Mucosa of descending colon (tissue), 3 donors: ENCODE measurements at regions of chr6 and their contacts with region 1.

Region 1: DNA sequence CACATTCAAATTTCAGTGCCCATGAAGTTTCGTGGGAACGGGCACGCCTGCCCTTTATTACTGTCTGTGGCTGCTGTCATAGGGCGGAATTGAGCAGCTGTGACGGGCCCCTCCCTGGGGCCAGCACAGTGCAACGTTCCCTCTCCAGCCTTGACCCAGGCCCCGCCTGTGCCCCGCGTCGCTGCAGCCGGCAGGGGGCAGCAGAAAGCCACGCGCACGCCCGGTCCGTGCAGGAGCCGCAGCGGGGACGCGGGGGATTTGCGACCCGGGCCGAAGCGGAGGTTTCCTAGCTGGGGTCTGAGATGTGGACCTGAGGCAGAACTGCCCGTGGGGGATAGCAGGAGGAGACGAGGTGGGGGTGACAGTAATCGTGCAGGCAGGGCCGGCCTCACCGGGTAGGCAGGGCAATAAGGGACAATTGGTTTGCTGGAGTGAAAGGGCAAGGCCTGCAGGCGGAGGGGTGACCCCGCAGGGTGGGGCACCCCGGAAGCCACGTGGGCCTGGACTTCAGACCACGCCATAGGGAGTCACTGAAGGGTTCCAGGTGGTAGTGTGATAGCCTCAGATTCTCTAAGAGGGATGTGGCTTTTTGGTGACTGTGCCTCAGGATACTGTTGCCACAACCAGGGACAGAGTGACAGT is 54.4 kb downstream of the SYTL3 start:
- DNase-seq: peak; percentile 91 to 96 (median 91)
- ATAC-seq: peak; percentile 94
- H3K4me3 ChIP-seq: no peak overlapping the region
- H3K4me1 ChIP-seq: peaks cover 5% of the 10 kb centered on the region
- CTCF ChIP-seq: peak; percentile 98

Region 2: GRCh38 chr6:157789861-157790260 is 914.4 kb before region 1 on chr6:
- intact Hi-C with region 1: no loop called
- DNase-seq: no peak
- ATAC-seq: no peak
- H3K4me3 ChIP-seq: no peak overlapping the region
- H3K4me1 ChIP-seq: no peaks in the 10 kb centered on the region
- CTCF ChIP-seq: no peak

Region 3: DNA sequence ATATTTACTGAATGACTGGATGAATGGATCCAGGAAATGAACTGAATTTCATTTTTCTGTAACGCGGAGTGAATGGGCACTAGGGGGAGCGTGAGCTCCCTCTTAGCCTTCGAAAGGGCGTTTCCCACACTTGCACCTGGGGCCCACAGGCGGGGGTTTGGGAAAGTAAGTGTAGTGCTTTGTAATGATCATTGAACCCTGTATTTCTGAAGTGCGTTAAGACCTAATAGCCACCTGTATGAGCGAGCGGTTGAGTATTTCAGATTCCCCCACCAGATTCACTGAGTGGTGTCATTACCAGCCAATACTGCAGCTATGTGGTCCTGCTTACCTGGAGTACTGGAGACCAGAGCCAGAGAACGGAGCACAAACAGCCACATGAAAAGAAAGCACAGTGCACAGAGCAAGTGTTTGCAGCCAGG is 44.0 kb before region 1 on chr6:
- intact Hi-C with region 1: no loop called
- DNase-seq: peak; percentile 55 to 66 (median 63)
- ATAC-seq: peak; percentile 81
- H3K4me3 ChIP-seq: no peak overlapping the region
- H3K4me1 ChIP-seq: peaks cover 19% of the 10 kb centered on the region
- CTCF ChIP-seq: peak; percentile 39

Region 4: DNA sequence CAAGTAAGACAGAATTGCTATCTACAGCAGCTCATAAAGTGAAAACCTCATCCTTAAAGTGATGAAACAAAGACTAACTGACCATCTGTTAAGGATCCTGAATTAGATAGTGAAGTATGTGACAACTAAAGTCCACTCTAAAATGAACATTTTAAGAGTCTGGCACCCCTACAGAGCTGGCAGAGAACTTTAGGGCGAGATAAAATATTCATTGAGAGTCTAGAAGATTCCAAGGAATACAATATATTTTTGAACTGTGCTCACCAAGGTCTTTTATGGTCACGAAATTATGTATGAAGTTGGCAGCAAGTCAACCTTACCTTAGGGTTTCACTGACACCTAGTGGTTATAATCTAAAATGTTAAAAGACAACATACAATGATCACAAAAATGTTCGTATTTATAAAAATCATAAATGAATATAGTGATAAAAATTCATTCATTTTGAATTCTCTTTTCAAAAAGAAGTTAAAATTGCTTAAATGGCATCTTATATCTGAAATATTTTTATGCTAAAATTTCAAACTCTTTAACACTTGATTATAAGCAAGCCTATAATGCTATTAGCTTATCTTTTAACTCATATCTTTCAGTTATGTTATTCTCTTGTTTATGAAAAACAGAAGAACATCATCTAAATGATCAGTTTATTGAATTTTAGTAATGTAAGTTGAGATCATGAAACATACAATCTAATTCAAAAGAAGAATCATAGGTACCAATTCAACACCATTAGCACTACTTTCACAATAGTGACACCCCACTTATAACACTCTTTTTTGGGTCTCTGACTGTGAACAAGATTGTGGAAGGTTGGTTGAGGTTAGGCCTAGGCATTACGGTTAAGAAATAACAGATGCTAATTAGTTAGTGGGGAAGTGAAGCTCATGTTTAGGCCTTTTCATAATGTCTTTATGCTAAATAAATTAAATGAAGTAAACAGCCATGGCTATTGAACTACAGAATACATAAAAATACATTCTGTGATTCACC is 268.2 kb after region 1 on chr6:
- intact Hi-C with region 1: loop called (anchors 5 to 10 kb)
- DNase-seq: peak in 1 of 3 donors; percentile 17
- ATAC-seq: peak; percentile 86
- H3K4me3 ChIP-seq: no peak overlapping the region
- H3K4me1 ChIP-seq: peaks cover 4% of the 10 kb centered on the region
- CTCF ChIP-seq: no peak

Region 5: GRCh38 chr6:159134701-159135364 is 430.5 kb after region 1 on chr6:
- intact Hi-C with region 1: loop called in 1 of 2 experiments (anchors 10 kb)
- DNase-seq: peak in 2 of 3 donors; percentile 39 to 86
- ATAC-seq: peak; percentile 92
- H3K4me3 ChIP-seq: no peak overlapping the region
- H3K4me1 ChIP-seq: no peaks in the 10 kb centered on the region
- CTCF ChIP-seq: peak; percentile 89